Activated CD4-positive, alpha-beta memory T cell treated with anti-CD3 and anti-CD28 coated beads, Interleukin-2, amount 10 ng/mL, durations not matched to agents 7 days and 5 days (primary cell): ENCODE measurements at regions of chr3 and their contacts with region 1.

Region 1: DNA sequence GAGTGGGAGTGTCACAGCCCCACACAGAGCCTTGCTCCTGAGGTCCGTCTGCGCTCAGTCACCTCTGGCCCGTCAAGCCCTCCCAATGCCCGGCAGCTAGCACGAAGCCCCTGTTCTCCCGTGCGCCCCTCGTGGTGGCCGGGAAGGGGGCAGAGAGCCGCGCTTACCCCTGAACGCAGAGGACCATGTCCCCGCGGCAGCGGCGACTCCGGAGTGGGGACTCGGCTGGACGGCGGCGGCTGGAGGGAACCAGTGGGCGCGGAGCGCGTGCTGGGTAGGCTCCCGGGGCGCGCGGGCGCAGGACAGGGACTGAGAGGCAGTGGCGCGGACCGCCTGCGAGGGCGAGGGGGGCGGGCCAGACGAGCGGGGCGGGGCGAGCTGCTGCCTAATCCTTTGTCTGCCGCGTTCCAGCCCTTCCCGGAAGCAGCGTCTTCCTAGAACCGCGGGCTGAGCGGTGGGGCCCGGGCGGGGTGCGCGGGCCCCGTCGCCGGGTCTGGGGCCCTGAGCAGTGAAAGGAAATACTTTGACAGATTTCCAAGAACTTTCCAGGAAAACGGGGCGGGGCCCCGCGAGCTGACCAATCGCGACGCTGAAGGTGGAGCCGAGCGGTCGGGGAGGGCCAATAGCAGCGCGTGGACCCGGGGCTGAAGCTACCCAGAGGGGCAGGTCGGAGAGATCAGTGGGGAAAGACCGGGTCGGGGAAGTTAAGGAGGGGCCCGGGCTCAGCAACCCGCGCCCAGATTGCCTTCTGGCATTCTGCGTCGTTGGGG is at the start of gene CISH:
- DNase-seq: peak; percentile 99
- H3K4me3 Mint-ChIP-seq: peak within 1 kb of the TSS; percentile 98
- H3K27ac Mint-ChIP-seq: peak within 1 kb of the TSS; percentile 99
- H3K4me1 Mint-ChIP-seq: peaks cover 33% of the 10 kb centered on the region
- H3K27me3 Mint-ChIP-seq: no peaks in the 10 kb centered on the region
- total RNA-seq, gene CISH: 328 to 335 TPM

Region 2: DNA sequence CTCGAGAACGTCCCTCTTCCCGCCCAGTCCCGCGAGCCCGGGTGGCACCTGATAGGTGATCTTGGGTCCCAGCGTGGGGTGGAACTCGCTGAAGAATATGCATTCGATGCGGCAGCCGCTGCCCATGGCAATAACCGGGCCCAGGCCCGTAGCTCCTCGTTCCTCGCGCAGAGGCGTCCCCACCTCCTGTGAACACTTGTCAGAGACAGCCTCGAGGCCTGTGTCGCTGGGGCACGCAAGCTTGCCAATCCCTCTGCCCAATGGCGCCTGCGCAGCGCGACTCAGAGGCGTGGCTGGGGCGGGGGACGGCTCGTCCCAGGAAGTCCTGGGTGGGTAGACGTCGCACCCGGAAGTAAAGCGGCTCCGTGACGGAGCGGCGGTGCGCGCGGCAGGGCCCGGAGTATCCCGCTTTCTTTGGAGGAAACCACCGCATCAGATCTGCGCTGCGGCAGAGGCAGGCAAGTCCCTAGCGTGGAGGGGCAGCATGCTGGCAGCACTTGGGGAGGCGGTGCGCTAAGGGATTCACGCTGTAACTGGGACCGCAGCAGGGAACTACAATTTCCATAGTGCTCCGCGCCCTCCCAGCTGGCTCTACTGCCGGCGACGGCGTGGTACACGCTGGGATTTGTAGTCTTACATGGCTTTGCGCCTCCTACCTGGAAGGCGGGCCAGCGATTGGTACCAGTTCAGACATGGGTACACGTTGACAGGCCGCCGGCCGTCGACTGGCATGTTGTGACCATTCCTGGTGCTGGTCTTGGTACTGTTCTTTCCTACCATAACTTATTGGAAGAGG is 260.9 kb before region 1 on chr3 and contains the starts of genes CYB561D2 and NPRL2:
- CTCF ChIA-PET with region 1: interaction called, 5 read pairs
- POLR2A ChIA-PET with region 1: interaction called, 22 read pairs
- DNase-seq: peak; percentile 99
- H3K4me3 Mint-ChIP-seq: peak within 1 kb of the TSS; percentile 91
- H3K27ac Mint-ChIP-seq: peak within 1 kb of the TSS; percentile 93
- H3K4me1 Mint-ChIP-seq: peaks cover 66% of the 10 kb centered on the region
- H3K27me3 Mint-ChIP-seq: no peaks in the 10 kb centered on the region
- total RNA-seq, gene CYB561D2: 37.1 to 39.7 TPM
- total RNA-seq, gene NPRL2: 48.8 to 50.1 TPM

Region 3: DNA sequence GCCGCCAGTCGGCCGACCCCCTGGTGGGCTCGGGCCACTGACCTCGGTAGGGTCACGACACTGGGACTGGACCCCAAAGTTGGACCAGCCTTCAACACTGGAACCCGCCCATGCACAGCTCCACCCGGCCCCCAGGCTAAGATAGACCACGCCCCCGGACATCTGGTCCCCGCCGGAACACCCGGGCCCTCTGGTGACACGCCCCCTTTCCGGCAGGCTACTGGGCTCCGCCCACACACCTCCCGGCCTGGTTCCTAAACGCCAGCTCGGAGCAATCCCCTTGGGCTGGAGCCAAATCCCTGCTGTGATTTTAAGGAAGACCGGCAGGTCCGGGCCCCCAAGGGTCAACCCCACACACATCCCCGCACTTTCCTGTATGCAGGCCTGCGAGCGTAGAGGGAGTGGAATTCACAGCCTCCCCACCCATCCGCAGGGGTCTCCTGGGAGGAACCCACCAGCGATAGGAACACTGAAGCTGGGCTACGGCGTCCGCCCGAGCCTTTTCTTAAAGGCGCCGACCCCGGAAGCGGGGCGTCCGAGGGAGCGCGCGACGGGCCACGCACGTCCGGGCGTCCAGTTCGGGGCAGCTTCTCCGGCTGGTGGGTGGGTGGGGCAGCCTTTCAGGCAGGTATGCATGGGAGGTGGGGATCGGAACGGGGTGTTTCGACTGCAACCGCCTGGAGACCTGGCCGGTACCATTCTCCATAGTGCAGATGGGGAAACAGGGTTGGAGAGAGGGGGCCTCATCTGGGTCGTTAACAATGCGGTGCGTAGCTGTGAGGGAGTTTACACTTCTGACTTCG is 42.5 kb before region 1 on chr3 and contains the start of gene HEMK1:
- CTCF ChIA-PET with region 1: interaction called, 854 read pairs
- POLR2A ChIA-PET with region 1: interaction called, 4,963 read pairs
- DNase-seq: peak; percentile 95
- H3K4me3 Mint-ChIP-seq: peak within 1 kb of the TSS; percentile 98
- H3K27ac Mint-ChIP-seq: peak within 1 kb of the TSS; percentile 97
- H3K4me1 Mint-ChIP-seq: peaks cover 68% of the 10 kb centered on the region
- H3K27me3 Mint-ChIP-seq: no peaks in the 10 kb centered on the region
- total RNA-seq, gene HEMK1: 49.6 to 50.1 TPM

Region 4: DNA sequence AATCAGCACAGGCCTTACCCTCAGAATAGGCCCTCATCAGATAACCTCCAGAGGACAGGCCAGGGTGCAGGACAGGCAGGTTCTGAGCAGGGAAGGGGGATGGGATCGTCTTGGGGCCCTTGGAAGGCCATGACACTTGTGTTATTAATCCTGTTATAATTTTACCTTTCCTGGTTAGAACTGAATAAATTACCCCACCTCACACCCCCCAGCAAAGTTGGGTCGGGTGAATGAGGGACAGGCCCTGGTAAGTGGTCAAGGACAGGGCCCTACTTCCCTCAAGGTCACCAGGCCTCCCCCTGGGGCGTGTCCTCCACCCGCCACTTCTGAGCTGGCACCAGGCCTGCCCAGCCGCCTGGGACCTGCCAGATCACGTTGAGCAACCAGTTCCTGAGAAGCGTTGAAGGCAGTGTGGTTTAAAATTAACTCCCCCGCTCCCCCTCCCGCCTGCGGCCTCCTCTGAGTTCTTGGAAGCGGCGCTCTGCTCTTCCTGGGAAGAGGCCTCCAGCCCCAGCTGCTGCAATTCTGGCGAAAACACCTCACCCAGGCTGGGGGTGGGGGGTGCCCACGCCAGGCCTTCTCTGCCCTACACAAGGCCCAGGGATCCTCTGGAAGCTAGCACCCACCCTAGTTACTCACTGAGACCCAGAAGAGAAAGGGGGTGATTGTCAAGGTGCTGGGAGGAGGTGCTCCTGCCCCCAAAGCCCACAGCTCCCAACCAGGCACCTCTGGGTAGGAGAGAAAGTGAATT is 10.6 kb before region 1 on chr3:
- CTCF ChIA-PET with region 1: interaction called, 24 read pairs
- POLR2A ChIA-PET with region 1: interaction called, 978 read pairs
- DNase-seq: peak; percentile 92
- H3K4me3 Mint-ChIP-seq: peak overlapping the region; percentile 71
- H3K27ac Mint-ChIP-seq: peak overlapping the region; percentile 99
- H3K4me1 Mint-ChIP-seq: peaks cover 88% of the 10 kb centered on the region
- H3K27me3 Mint-ChIP-seq: no peaks in the 10 kb centered on the region

Region 5: GRCh38 chr3:50652709-50653108 is 41.1 kb after region 1 on chr3:
- CTCF ChIA-PET with region 1: interaction called, 57 read pairs
- POLR2A ChIA-PET with region 1: interaction called, 24 read pairs
- DNase-seq: peak; percentile 68
- H3K4me3 Mint-ChIP-seq: no peak overlapping the region
- H3K27ac Mint-ChIP-seq: peak overlapping the region; percentile 16
- H3K4me1 Mint-ChIP-seq: peaks cover 23% of the 10 kb centered on the region
- H3K27me3 Mint-ChIP-seq: no peaks in the 10 kb centered on the region

Region 6: DNA sequence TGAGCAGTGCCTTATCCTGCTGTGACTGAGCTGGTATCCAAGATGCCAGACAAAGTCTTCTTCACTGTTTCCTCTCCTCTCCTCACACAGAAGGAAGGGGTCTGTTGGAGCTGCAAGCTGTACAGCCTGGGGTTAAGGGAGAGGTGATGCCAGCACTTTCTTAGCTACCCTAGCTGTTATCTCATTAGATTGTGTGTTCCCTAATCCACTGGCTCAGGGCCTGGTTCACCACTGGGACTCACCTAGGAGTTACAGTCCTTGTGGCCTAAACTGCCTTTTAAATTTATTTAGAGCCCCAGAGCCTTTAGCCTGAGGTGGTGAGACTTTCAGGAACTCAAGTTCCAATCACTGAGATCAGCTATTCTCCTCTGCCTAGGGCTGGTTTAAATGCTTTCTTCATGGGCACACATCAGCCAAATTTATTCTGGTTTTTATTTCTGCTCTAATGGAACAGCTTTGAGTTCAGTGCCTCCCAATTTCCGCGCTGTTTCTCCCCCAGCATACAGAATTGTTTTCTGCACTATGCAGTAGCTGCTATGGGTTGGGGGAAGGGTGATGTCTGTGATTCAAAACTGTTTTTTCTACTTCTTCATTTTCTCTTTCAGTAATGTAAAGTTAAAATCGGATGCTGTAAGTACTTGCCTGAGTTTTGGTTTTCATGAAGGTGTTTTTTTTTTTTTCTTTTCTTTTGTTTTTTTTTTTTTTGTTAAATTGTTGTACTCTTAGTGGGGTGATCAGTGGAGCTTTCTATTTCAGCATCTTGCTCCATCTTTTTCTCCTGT is 261.9 kb after region 1 on chr3:
- CTCF ChIA-PET with region 1: no interaction called
- POLR2A ChIA-PET with region 1: no interaction called
- DNase-seq: no peak
- H3K4me3 Mint-ChIP-seq: no peak overlapping the region
- H3K27ac Mint-ChIP-seq: no peak overlapping the region
- H3K4me1 Mint-ChIP-seq: no peaks in the 10 kb centered on the region
- H3K27me3 Mint-ChIP-seq: peaks cover 5% of the 10 kb centered on the region

Region 7: GRCh38 chr3:51371943-51372557 is 760.4 kb after region 1 on chr3:
- CTCF ChIA-PET with region 1: interaction called, 18 read pairs
- POLR2A ChIA-PET with region 1: interaction called, 6 read pairs
- DNase-seq: peak; percentile 61
- H3K4me3 Mint-ChIP-seq: no peak overlapping the region
- H3K27ac Mint-ChIP-seq: no peak overlapping the region
- H3K4me1 Mint-ChIP-seq: no peaks in the 10 kb centered on the region
- H3K27me3 Mint-ChIP-seq: peaks cover 3% of the 10 kb centered on the region